ENCODE measurements at regions of chr15 and their contacts with region 1.

Region 1: GRCh38 chr15:71780115-71780976 is 30.0 kb upstream of the NR2E3 start:
- DNase-seq: peak; percentile 63
- ATAC-seq: peak; percentile 73
- H3K4me3 Mint-ChIP-seq: peak overlapping the region; percentile 37
- H3K27ac Mint-ChIP-seq: peak overlapping the region; percentile 82
- H3K4me1 Mint-ChIP-seq: peaks cover 27% of the 10 kb centered on the region
- H3K27me3 Mint-ChIP-seq: peaks cover 6% of the 10 kb centered on the region

Region 2: GRCh38 chr15:71743861-71744382 is 36.4 kb before region 1 on chr15:
- CTCF ChIA-PET with region 1: interaction called, 36 read pairs
- DNase-seq: peak; percentile 67
- ATAC-seq: no peak
- H3K4me3 Mint-ChIP-seq: no peak overlapping the region
- H3K27ac Mint-ChIP-seq: no peak overlapping the region
- H3K4me1 Mint-ChIP-seq: peaks cover 7% of the 10 kb centered on the region
- H3K27me3 Mint-ChIP-seq: peaks cover 34% of the 10 kb centered on the region

Region 3: DNA sequence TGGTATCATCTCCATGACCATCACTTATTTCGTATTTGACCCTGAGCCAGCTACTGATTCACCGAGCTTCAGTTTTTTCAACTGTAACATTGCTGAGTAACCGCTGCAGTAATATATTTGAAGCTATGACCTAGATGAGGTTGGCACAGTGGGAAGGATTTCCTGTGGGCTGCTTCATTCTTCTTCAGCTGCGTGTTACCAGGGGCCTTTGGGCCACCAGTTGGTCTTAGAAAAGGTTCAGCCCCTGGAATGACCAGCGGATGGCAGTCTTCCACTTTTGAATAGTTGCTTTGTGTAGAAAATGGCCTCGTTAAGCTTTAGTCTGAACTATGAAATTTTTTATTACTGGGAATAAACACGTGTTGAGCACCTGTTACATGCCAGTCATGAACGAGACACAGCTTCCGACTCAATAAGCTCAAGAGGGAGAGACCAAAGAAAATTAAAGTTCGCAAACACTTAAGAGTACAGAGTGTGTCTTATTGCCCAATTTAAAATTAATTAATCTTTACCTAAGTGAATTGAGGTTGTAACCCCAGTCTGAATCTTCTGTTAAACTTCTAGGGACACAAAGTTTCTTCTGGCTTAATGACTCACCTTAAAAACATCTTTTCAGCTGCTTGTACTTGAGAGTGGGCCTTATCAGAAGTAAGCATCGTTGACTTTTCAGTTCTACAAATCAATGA is 27.6 kb before region 1 on chr15:
- CTCF ChIA-PET with region 1: interaction called, 27 read pairs
- DNase-seq: peak; percentile 70
- ATAC-seq: peak; percentile 58
- H3K4me3 Mint-ChIP-seq: no peak overlapping the region
- H3K27ac Mint-ChIP-seq: no peak overlapping the region
- H3K4me1 Mint-ChIP-seq: peaks cover 20% of the 10 kb centered on the region
- H3K27me3 Mint-ChIP-seq: peaks cover 21% of the 10 kb centered on the region

Region 4: GRCh38 chr15:71874245-71874644 is 93.9 kb after region 1 on chr15:
- CTCF ChIA-PET with region 1: no interaction called
- DNase-seq: no peak
- ATAC-seq: no peak
- H3K4me3 Mint-ChIP-seq: no peak overlapping the region
- H3K27ac Mint-ChIP-seq: no peak overlapping the region
- H3K4me1 Mint-ChIP-seq: peaks cover 3% of the 10 kb centered on the region
- H3K27me3 Mint-ChIP-seq: no peaks in the 10 kb centered on the region

Region 5: GRCh38 chr15:72155635-72156616 is 375.6 kb after region 1 on chr15:
- CTCF ChIA-PET with region 1: interaction called, 29 read pairs
- DNase-seq: peak; percentile 89
- ATAC-seq: peak; percentile 95
- H3K4me3 Mint-ChIP-seq: peak overlapping the region; percentile 65
- H3K27ac Mint-ChIP-seq: no peak overlapping the region
- H3K4me1 Mint-ChIP-seq: peaks cover 4% of the 10 kb centered on the region
- H3K27me3 Mint-ChIP-seq: no peaks in the 10 kb centered on the region

Measured in activated CD8-positive, alpha-beta memory T cell treated with anti-CD3 and anti-CD28 coated beads, Interleukin-2, amount 10 ng/mL, durations not matched to agents 7 days and 5 days (primary cell).